Ascending aorta (tissue), 2 donors: ENCODE measurements at regions of chr17 and their contacts with region 1.

Region 1: GRCh38 chr17:64661976-64662773 is at the start of gene SMURF2:
- DNase-seq: peak; percentile 19 to 85
- H3K4me3 ChIP-seq: peak within 1 kb of the TSS; percentile 74 to 98
- H3K27ac ChIP-seq: peak within 1 kb of the TSS; percentile 86
- H3K4me1 ChIP-seq: peaks cover 0 to 14% of the 10 kb centered on the region in 2 donors
- H3K27me3 ChIP-seq: no peaks in the 10 kb centered on the region
- CTCF ChIP-seq: peak in 1 of 3 experiments; percentile 16
- total RNA-seq, gene SMURF2: 17.6 TPM

Region 2: GRCh38 chr17:64506576-64507477 is 155.3 kb before region 1 on chr17 and contains the start of gene CEP95:
- intact Hi-C with region 1: loop called (anchors 5 kb)
- DNase-seq: peak; percentile 76 to 98
- H3K4me3 ChIP-seq: peak within 1 kb of the TSS; percentile 91 to 99
- H3K27ac ChIP-seq: peak within 1 kb of the TSS; percentile 99 to 100
- H3K4me1 ChIP-seq: peaks cover 10 to 41% of the 10 kb centered on the region in 2 donors
- H3K27me3 ChIP-seq: no peaks in the 10 kb centered on the region
- CTCF ChIP-seq: peak in 1 of 3 experiments; percentile 47
- total RNA-seq, gene CEP95: 6.9 TPM

Region 3: DNA sequence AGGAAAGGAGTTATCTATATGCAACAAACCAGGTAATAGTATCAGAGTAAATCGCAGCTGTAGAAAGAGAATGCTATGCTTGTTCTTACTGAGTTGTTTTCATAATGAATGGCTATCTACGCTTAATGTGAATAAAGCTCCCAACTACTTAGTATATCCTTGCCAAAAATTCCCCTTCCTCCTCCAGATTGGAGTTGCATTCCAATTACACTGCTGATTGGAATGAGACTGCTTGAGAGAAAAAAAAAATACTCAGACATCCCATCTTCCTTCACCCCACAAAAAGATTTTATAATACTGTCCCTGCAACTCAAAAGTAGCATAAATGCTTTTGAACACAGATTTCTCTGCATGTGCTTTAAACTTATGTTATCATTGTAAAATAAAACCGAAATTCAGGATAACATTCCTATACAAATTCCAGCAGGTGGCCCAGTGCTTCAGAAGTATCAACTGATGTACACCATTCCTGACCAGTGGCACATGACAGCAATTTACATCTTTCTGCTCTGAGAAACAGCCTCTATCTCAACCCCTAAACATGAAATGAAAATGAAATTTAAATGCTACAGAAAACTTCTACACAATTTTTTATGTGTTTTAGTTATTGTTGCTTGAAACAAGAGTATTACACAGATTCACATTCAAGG is 47.0 kb before region 1 on chr17:
- intact Hi-C with region 1: loop called (anchors 1 kb)
- DNase-seq: no peak
- H3K4me3 ChIP-seq: no peak overlapping the region
- H3K27ac ChIP-seq: no peak overlapping the region
- H3K4me1 ChIP-seq: peaks cover 3 to 14% of the 10 kb centered on the region in 2 donors
- H3K27me3 ChIP-seq: no peaks in the 10 kb centered on the region
- CTCF ChIP-seq: no peak

Region 4: DNA sequence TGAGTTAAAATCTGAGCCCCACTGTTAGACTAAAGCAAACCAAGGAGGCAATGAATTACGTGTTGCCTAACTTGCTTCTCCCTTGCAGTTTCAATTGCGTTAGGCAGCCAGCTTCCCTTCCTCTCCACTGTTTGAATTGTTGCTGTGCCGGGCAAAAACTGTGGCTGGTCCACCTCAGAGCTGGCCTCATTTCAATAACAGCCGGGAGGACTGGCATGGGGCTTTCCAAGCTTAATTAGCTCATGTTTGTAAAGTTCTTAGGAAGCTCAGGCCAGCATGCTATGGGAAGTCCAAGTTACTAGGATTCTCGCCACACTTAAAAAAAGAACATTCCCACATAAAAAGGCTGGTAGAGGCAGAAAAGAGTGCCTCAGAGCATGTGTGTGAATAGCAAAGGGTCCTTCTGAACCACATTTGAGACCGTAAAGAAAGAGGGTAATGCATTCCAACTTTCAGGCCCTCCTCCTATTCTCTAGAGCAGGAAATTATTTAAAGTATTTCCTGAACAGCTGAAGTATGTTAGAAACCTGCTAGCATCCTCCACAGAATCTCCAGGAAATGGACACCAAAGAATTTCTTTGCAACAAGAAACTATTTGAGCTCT is 79.0 kb after region 1 on chr17:
- intact Hi-C with region 1: loop called (anchors 5 kb)
- DNase-seq: peak; percentile 29 to 75
- H3K4me3 ChIP-seq: no peak overlapping the region
- H3K27ac ChIP-seq: peak overlapping the region; percentile 74 to 80
- H3K4me1 ChIP-seq: peaks cover 0 to 25% of the 10 kb centered on the region in 2 donors
- H3K27me3 ChIP-seq: no peaks in the 10 kb centered on the region
- CTCF ChIP-seq: no peak